Activated CD8-positive, alpha-beta T cell treated with anti-CD3 and anti-CD28 coated beads, Interleukin-2, amount 10 ng/mL, durations not matched to agents 7 days and 5 days (primary cell): ENCODE measurements at regions of chr9 and their contacts with region 1.

Region 1: DNA sequence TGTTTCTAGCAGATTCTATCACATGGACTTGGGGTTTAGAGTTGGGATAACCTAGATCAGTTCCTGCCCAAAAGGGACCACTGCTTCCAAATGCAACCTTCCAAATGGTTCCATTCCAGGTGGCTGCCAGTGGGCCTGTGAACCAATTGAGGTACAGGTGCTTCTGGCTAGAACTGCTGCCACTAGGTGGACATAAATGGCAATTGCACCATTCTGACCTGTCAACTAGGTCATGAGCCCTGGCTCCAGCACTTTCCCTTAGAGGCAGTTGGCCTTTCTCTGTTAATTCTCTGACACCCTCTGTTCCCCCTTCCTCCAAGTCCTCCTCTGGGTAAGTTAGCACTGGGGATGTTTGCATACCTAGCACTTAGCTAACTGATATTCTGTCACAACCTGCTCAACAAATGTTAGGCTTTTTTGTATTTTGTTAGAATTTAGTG is 16.6 kb upstream of the HEMGN start:
- DNase-seq: peak; percentile 71
- ATAC-seq: peak; percentile 98
- H3K4me3 Mint-ChIP-seq: no peak overlapping the region
- H3K27ac Mint-ChIP-seq: no peak overlapping the region
- H3K4me1 Mint-ChIP-seq: peaks cover 7% of the 10 kb centered on the region
- H3K27me3 Mint-ChIP-seq: peaks cover 6% of the 10 kb centered on the region

Region 2: DNA sequence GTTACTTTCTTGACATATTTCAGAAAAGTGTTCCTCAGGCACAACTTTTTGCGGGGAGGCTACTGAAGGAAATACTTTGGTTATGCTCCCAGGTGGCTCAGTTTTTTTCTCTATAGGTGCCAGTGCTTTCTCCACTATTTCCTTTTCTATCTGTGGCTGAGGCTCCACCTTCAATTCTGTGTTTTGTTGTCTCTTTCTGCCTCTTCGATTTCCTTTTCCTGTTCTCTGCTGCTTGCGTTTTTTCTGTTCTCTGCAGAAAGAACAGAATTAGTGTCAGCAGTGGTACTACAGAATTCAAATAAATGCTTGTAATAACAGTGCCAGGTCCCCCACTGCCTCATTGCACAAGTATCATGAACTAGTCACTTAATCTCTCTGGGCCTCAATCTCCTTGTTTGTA is 23.6 kb before region 1 on chr9:
- CTCF ChIA-PET with region 1: interaction called, 21 read pairs
- POLR2A ChIA-PET with region 1: no interaction called
- DNase-seq: peak; percentile 32
- ATAC-seq: peak; percentile 75
- H3K4me3 Mint-ChIP-seq: peak overlapping the region; percentile 68
- H3K27ac Mint-ChIP-seq: peak overlapping the region; percentile 90
- H3K4me1 Mint-ChIP-seq: peaks cover 44% of the 10 kb centered on the region
- H3K27me3 Mint-ChIP-seq: no peaks in the 10 kb centered on the region

Region 3: GRCh38 chr9:97938081-97938644 is 16.4 kb before region 1 on chr9 and contains the start of gene HEMGN:
- CTCF ChIA-PET with region 1: interaction called, 20 read pairs
- POLR2A ChIA-PET with region 1: no interaction called
- DNase-seq: peak; percentile 59
- ATAC-seq: peak; percentile 90
- H3K4me3 Mint-ChIP-seq: peak within 1 kb of the TSS; percentile 32
- H3K27ac Mint-ChIP-seq: peak within 1 kb of the TSS; percentile 85
- H3K4me1 Mint-ChIP-seq: peaks cover 33% of the 10 kb centered on the region
- H3K27me3 Mint-ChIP-seq: peaks cover 6% of the 10 kb centered on the region
- total RNA-seq, gene HEMGN: 1.2 to 1.6 TPM

Region 4: GRCh38 chr9:97943308-97943855 is 11.2 kb before region 1 on chr9:
- CTCF ChIA-PET with region 1: interaction called, 20 read pairs
- POLR2A ChIA-PET with region 1: no interaction called
- DNase-seq: no peak
- ATAC-seq: no peak
- H3K4me3 Mint-ChIP-seq: no peak overlapping the region
- H3K27ac Mint-ChIP-seq: no peak overlapping the region
- H3K4me1 Mint-ChIP-seq: peaks cover 6% of the 10 kb centered on the region
- H3K27me3 Mint-ChIP-seq: peaks cover 20% of the 10 kb centered on the region

Region 5: DNA sequence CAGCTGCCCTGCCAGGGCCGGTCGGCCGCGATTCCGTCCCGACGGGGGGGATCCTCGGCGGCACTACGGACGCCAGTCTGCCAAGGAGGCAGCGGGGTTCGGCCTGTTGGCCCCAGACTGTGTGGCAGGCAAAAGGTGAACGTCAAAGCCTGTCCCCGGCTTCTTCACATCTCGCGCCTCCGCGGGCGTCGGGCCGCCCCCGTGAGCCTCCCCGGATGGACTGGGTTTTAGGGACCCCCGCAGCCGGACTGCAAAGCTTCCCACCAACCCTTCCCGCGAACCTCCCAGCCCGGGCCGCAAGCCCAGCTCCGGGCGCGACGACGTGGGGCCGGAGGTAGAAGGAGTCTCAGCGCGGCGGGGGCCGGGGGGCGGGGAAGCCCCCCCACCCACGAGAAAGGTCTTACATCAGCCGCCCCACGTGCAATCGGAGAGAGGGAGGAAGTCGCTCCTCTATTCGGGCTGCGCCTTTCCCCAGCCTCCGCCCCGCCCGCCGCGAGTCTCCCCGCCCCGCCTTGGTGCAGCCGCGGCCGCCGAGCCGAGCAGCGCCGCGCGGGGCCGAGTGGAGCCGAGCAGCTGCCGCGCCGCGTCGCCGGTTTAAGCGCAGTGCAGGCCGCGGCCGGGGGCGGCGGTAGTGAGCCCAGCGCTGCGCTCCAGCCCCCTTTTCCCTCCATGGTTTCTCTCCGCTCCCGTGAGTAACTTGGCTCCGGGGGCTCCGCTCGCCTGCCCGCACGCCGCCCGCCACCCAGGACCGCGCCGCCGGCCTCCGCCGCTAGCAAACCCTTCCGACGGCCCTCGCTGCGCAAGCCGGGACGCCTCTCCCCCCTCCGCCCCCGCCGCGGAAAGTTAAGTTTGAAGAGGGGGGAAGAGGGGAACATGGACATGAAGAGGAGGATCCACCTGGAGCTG is 28.4 kb after region 1 on chr9 and contains the start of gene ANP32B:
- CTCF ChIA-PET with region 1: interaction called, 12 read pairs
- POLR2A ChIA-PET with region 1: interaction called, 3 read pairs
- DNase-seq: peak; percentile 95
- ATAC-seq: peak; percentile 83
- H3K4me3 Mint-ChIP-seq: peak within 1 kb of the TSS; percentile 84
- H3K27ac Mint-ChIP-seq: peak within 1 kb of the TSS; percentile 95
- H3K4me1 Mint-ChIP-seq: peaks cover 48% of the 10 kb centered on the region
- H3K27me3 Mint-ChIP-seq: no peaks in the 10 kb centered on the region
- total RNA-seq, gene ANP32B: 347 to 354 TPM

Region 6: GRCh38 chr9:98056269-98057137 is 101.9 kb after region 1 on chr9 and contains the start of gene NANS:
- CTCF ChIA-PET with region 1: no interaction called
- POLR2A ChIA-PET with region 1: no interaction called
- DNase-seq: peak; percentile 95
- ATAC-seq: peak; percentile 95
- H3K4me3 Mint-ChIP-seq: peak within 1 kb of the TSS; percentile 99
- H3K27ac Mint-ChIP-seq: peak within 1 kb of the TSS; percentile 99
- H3K4me1 Mint-ChIP-seq: peaks cover 39% of the 10 kb centered on the region
- H3K27me3 Mint-ChIP-seq: no peaks in the 10 kb centered on the region
- total RNA-seq, gene NANS: 45.5 to 46.6 TPM